ENCODE measurements at regions of chr1 and their contacts with region 1.

Region 1: DNA sequence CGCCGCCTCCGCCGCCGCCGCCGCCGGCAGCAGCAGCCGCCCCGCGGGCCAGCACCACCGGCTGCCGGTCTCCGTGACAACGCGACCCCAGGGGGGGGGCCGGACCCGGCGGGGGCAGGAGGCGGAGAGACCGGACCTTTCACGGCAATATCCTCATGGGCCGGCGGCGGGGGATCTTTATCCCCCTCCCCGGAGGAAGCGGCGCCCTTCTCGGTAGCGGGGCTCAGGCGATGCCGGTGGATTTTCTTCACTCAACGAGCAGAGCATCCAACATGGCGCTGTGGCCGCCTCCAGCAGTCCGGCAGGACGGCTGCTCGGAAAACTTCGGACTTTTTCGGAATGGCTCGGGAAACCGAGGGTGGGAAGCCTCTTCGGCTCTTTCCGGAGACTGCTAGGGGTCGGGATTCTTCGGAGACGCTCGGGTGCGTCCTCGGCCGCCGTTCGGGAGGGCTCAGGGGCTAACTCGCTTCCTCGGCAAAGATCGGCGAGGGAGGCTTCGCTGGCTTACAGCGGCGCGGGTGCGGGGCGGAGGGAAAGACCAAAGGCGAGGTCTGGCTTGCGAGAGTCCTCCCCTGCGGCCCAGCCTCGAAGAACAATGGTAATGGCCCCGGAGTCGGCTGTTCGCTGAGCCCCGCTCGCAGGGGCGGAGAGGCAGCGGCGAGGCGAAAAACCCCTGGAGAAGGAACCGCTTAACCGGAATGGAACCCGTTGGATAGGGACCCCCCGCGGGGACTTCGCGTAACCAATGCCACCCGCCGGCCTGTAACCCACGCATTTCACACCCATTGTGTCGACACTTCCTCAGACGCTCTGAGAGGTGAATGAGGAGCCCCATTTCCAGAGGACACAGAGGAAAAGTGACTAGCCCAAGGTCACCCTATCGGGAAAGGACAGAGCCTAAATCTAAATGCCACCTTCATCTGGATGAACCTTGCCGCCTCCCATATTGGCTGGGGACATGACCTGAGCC is at the start of gene EIF4G3:
- DNase-seq: peak; percentile 98
- H3K4me3 ChIP-seq: peak within 1 kb of the TSS; percentile 84 to 100 (median 94)
- H3K27ac ChIP-seq: peak within 1 kb of the TSS; percentile 86
- H3K4me1 ChIP-seq: peaks cover 12% of the 10 kb centered on the region
- H3K27me3 ChIP-seq: no peaks in the 10 kb centered on the region
- CTCF ChIP-seq: no peak
- POLR2A ChIP-seq: peak; percentile 76
- total RNA-seq, gene EIF4G3: 78.5 and 84.0 TPM in 2 replicates

Region 2: GRCh38 chr1:20913242-20913641 is 263.6 kb before region 1 on chr1:
- CTCF ChIA-PET with region 1: no interaction called
- POLR2A ChIA-PET with region 1: no interaction called
- dilution Hi-C with region 1: no loop called
- intact Hi-C with region 1: no loop called
- DNase-seq: no peak
- H3K4me3 ChIP-seq: no peak overlapping the region
- H3K27ac ChIP-seq: no peak overlapping the region
- H3K4me1 ChIP-seq: no peaks in the 10 kb centered on the region
- H3K27me3 ChIP-seq: no peaks in the 10 kb centered on the region
- CTCF ChIP-seq: no peak
- POLR2A ChIP-seq: no peak

Region 3: DNA sequence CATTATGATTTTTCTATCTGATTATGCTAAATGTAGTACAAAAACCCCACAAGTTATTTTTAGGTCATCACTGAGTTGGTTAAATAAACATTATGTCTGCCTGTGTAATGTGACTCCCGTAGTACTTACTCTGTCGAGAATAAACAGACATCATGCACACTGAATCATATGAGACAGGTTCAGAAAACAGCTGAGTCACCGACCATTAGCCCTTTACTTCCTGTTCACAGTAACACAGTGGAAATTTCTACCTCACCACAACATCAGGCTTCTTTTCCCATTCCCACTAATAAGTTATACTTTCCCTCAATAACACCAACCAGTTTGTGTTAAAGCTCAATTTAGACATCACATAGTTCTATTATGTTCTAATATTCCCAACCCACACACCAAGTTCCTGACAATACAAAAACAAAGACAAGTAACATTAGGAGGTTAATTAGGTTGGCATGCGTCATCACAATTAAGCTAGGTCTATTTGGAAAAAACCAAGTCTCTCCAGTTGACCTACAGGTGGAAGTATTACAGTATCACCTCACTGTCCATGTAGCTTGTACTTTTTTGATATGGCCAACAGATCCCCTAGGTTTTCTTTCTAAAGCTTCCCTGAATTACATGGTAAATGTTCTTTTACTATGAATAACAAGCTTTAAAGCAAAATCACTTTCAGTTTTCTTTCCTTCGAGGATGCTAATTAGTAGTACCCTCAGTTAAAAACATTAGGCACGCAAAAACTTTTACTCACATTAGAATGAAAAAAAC is 154.4 kb before region 1 on chr1:
- CTCF ChIA-PET with region 1: interaction called, 4 read pairs
- POLR2A ChIA-PET with region 1: no interaction called
- dilution Hi-C with region 1: no loop called
- intact Hi-C with region 1: loop called (anchors 2 kb)
- DNase-seq: peak; percentile 99
- H3K4me3 ChIP-seq: peak overlapping the region in 1 of 3 experiments; percentile 40
- H3K27ac ChIP-seq: peak overlapping the region; percentile 98
- H3K4me1 ChIP-seq: peaks cover 15% of the 10 kb centered on the region
- H3K27me3 ChIP-seq: no peaks in the 10 kb centered on the region
- CTCF ChIP-seq: no peak
- POLR2A ChIP-seq: no peak